ENCODE measurements at regions of chr7 and their contacts with region 1.

Region 1: DNA sequence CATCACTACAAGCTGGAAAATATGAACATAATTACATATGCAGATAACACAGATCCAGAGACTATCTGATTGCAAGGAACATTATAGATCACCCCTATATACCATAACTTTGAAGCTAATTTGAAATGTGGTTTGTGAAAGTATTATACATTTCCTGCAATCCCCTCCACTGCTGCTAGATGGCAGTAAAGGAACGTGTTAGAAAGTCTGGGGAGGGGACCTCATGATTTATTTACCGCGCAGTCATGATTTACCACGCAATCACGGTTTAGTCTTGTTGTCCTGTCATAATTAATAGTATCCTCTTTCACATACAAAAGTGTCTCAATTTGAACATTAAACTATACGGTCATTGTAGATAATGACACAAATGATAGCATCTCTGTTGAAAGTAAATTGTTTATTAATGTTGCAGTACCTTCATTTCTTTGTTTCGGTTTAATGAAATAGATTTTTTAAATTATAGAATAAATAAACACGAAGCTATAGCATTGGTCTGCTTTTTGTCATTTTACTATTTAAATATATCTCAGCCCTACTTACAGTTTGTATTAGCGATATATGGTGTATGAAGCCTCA is 145.3 kb upstream of the PRSS1 start:
- DNase-seq: peak; percentile 66
- ATAC-seq: peak; percentile 53
- H3K4me3 Mint-ChIP-seq: no peak overlapping the region
- H3K27ac Mint-ChIP-seq: no peak overlapping the region
- H3K4me1 Mint-ChIP-seq: peaks cover under 1% of the 10 kb centered on the region
- H3K27me3 Mint-ChIP-seq: peaks cover 12% of the 10 kb centered on the region

Region 2: DNA sequence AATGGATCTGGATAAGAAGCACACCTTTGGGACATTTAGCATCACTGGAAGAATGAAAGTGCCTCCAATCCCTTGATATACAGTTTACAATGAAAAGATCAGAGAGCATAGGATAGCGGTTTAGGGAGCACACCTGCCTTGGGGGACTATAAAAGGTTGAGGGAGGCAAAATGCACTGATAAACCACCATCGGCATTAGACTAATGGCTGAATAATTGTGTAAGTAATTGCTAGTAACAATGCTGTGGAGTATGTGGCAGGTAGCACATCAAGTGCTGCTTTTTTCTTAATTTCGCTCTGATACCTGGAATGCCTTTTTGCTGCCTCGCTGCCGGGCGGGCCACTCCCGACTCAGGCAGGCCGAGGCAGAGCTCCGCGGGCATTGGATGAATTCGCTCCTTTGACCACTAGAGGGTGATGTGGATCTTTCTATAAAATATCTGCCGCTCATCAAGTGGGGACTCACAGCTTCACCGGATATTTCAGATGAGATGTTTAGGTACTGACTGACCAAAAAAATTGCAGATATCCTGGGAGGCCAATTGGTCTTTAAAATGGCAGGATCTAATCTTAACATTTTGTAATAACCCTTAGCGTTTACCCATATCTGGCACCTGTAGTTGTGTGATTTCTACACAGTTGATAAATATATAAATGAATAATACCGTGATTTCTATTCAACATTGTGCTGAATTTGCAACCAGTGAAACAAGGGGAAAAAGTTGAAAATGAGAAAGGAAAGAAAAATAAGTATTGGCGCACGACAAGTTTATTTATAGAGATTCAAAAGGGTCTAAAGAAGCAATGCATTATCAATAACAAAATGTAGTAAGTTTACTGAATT is 28.6 kb after region 1 on chr7:
- CTCF ChIA-PET with region 1: interaction called, 12 read pairs
- POLR2A ChIA-PET with region 1: no interaction called
- DNase-seq: peak; percentile 71
- ATAC-seq: peak; percentile 81
- H3K4me3 Mint-ChIP-seq: no peak overlapping the region
- H3K27ac Mint-ChIP-seq: no peak overlapping the region
- H3K4me1 Mint-ChIP-seq: peaks cover 18% of the 10 kb centered on the region
- H3K27me3 Mint-ChIP-seq: peaks cover 13% of the 10 kb centered on the region

Measured in activated CD8-positive, alpha-beta T cell treated with anti-CD3 and anti-CD28 coated beads, Interleukin-2, amount 10 ng/mL, durations not matched to agents 7 days and 5 days (primary cell).